ENCODE measurements at regions of chr1 and their contacts with region 1.

Region 1: GRCh38 chr1:154225370-154225769 is 4.6 kb downstream of the UBAP2L start:
- DNase-seq: no peak
- ATAC-seq: no peak
- H3K4me3 ChIP-seq: no peak overlapping the region
- H3K27ac ChIP-seq: no peak overlapping the region
- H3K4me1 ChIP-seq: no peaks in the 10 kb centered on the region
- H3K27me3 ChIP-seq: no peaks in the 10 kb centered on the region

Region 2: GRCh38 chr1:154263465-154264332 is 38.3 kb after region 1 on chr1:
- intact Hi-C with region 1: loop called in 1 of 2 experiments (anchors 5 kb)
- DNase-seq: no peak
- ATAC-seq: no peak
- H3K4me3 ChIP-seq: no peak overlapping the region
- H3K27ac ChIP-seq: no peak overlapping the region
- H3K4me1 ChIP-seq: no peaks in the 10 kb centered on the region
- H3K27me3 ChIP-seq: no peaks in the 10 kb centered on the region